Calu3 (cell line): ENCODE measurements at regions of chr16 and their contacts with region 1.

Region 1: DNA sequence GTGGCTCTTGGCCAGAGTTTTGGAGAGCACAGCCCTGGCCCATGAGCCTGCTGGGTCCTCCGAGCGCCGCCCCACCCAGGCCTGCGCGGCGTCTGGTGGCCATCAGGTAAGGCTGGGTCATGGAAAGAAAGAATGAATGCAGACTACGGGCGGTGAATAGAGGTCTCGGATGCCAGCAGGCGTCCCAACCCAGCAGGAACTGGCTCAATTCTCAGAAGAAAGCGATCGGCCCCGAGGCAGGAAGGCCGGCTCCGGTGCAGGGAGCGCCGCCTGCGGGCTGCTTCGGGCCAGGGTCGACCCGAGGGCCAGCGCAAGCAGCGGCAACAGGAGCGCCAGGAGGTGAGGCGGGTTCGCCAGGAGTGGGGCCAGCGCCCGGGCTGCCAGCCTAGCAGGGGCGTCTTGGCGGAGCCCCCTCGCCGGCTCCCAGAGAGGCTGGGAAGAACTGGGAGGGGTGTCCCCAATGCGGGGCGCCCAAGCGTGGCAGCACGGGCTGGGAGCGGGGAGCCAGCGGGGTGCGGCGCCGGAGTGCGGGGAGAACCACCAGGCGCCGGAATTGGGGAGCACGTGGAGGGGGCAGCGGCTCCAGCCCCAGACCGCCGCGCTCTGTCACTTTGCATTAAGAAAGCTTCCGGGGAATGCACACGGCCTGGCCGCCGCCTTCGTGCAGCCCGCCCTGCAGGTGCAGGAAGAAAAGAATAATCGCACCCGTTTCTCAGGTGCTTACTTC is 7.1 kb upstream of the TMC5 start:
- DNase-seq: peak; percentile 85
- H3K4me3 Mint-ChIP-seq: peak overlapping the region; percentile 81
- H3K27ac Mint-ChIP-seq: peak overlapping the region; percentile 85
- H3K4me1 Mint-ChIP-seq: peaks cover 32% of the 10 kb centered on the region
- H3K27me3 Mint-ChIP-seq: no peaks in the 10 kb centered on the region
- CTCF ChIP-seq: no peak

Region 2: DNA sequence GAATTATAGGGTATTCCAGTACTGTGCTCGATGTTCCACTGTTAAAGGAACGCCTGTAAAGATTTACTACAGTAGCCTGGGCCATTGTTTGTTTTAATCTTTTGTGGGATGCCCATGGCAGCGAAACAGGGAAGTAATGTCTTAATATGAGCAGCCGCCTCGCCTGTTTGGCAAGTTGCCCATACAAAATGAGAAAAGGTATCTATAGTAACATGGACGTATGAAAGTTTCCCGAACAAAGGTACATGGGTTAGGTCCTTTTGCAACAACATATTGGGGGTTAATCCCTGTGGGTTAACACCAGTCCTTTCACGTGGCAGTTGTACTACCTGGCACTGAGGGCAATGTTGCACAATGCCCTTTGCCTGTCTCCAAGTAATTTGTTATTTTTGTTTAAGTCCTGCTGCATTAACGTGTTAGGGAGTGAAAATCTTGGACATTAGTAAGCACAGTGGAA is 14.0 kb before region 1 on chr16:
- CTCF ChIA-PET with region 1: interaction called, 4 read pairs
- intact Hi-C with region 1: loop called (anchors 1 kb)
- DNase-seq: peak; percentile 80
- H3K4me3 Mint-ChIP-seq: peak overlapping the region; percentile 57
- H3K27ac Mint-ChIP-seq: peak overlapping the region; percentile 95
- H3K4me1 Mint-ChIP-seq: peaks cover 51% of the 10 kb centered on the region
- H3K27me3 Mint-ChIP-seq: no peaks in the 10 kb centered on the region
- CTCF ChIP-seq: no peak

Region 3: DNA sequence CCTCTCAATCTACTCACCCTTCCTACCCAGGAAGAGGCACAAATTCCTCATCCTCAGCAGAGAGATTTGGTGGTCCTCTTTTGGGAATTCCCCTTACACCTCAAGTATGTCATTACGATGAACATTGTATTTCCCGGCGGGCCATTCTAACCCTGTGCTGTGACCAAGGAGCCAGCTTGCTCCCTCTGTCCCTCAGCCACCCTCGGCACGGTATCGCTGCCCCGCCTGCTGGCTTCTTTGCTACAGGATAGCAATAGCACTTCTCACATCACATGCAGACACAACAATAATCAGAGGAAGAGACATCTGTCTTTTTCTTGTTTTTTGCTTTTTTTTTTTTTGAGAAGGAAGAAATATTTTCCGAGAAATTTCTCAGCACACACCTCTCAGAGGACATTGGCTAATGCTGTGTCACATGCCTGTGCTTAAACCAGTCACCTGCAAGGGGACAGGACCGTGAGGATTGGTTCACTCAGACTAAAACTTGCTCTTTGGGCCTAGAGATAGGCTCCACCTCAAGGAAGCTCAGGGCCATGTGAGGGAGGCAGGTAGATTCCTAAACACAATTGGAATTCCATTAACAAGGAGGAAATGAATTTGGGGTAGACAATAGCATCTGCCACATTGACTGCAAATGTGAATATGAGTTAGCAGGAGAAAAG is 48.3 kb after region 1 on chr16:
- CTCF ChIA-PET with region 1: no interaction called
- intact Hi-C with region 1: no loop called
- DNase-seq: no peak
- H3K4me3 Mint-ChIP-seq: no peak overlapping the region
- H3K27ac Mint-ChIP-seq: peak overlapping the region; percentile 19
- H3K4me1 Mint-ChIP-seq: no peaks in the 10 kb centered on the region
- H3K27me3 Mint-ChIP-seq: no peaks in the 10 kb centered on the region
- CTCF ChIP-seq: no peak

Region 4: DNA sequence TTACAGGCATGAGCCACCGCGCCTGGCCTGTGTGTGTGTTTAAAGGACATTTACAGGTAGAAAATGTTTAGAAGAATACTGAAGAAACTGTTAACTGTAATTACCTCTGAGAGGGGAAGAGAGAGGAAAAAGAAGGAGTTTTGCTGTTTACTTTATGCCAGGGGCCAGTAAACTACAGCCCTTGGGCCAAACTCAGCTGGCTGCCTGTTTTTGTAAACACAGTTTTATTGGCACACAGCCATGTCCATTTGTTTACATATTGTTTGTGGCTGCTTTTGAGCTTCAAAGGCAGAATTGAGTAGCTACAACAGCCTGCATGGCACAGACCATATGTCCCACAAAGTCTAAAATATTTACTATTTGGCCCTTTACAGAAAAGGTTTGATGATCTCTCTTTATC is 586.7 kb after region 1 on chr16:
- CTCF ChIA-PET with region 1: no interaction called
- intact Hi-C with region 1: no loop called
- DNase-seq: no peak
- H3K4me3 Mint-ChIP-seq: no peak overlapping the region
- H3K27ac Mint-ChIP-seq: no peak overlapping the region
- H3K4me1 Mint-ChIP-seq: no peaks in the 10 kb centered on the region
- H3K27me3 Mint-ChIP-seq: peaks cover 63% of the 10 kb centered on the region
- CTCF ChIP-seq: no peak